Activated naive CD4-positive, alpha-beta T cell treated with anti-CD3 and anti-CD28 coated beads for 36 hours (primary cell): ENCODE measurements at regions of chr1 and their contacts with region 1.

Region 1: DNA sequence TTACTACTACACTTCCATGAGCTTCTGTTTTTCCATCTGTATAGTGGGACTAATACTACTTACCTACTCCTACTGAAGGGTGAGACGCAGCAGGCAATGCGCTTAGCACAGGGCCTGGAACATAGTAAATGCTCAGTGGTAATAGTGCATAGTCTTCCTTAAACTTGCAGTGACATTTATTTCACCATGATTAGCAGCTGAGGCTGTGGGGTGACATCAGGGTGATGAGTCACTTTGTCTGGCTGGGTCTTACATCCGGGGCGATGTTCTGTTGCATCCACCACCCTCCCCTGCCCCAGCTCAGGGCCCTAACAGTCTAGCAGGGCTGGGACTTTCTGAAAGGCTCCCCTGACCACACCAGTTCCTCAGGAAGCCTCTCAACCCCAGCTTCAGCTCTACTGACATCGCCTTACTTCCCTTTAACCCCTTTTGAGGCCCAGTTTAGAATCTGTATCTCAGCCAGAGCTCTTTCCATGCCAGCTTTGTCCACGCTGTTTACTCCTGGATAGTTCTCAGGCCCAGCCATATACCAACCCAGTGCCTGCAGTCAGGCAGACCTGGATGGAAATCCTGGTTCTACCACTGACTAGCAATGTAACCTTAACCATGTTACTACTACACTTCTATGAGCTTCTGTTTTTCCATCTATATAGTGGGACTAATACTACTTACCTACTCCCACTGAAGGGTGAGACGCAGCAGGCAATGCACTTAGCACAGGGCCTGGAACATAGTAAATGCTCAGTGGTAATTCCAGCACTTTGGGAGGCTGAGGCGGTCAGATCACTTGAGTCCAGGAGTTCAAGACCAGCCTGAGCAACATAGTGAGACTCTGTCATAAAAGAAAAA is 66.3 kb downstream of the CD58 start:
- DNase-seq: peak; percentile 92
- H3K4me3 Mint-ChIP-seq: peak overlapping the region; percentile 1
- H3K27ac Mint-ChIP-seq: peak overlapping the region; percentile 82
- H3K4me1 Mint-ChIP-seq: peaks cover 53% of the 10 kb centered on the region
- H3K27me3 Mint-ChIP-seq: no peaks in the 10 kb centered on the region

Region 2: DNA sequence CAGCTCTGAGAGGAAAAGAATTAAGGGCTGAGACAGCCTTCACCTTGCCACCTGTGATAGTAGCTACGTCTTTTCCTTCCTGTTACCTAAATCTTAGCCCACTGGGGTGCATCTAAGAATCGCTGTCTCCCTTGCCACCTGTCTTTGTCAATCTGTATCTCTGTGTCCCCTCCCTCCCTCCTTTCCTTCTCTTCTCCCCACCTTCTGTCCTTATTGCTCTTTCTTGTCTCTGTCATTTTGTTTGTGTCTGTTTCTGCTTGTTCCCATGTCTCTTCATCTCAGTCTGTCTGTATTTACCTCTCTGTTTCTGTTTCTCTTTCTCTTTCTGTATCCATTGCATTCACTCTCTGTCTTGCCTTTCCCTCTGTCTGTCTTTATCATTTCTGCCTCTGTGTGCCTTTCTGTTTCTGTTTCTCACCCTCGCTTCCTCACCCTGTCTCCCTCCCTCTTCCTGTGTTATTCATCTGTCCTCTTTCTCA is 498.0 kb before region 1 on chr1:
- CTCF ChIA-PET with region 1: no interaction called
- intact Hi-C with region 1: loop called (anchors 10 kb)
- DNase-seq: peak; percentile 10
- H3K4me3 Mint-ChIP-seq: peak overlapping the region; percentile 63
- H3K27ac Mint-ChIP-seq: peak overlapping the region; percentile 42
- H3K4me1 Mint-ChIP-seq: peaks cover 11% of the 10 kb centered on the region
- H3K27me3 Mint-ChIP-seq: no peaks in the 10 kb centered on the region

Region 3: DNA sequence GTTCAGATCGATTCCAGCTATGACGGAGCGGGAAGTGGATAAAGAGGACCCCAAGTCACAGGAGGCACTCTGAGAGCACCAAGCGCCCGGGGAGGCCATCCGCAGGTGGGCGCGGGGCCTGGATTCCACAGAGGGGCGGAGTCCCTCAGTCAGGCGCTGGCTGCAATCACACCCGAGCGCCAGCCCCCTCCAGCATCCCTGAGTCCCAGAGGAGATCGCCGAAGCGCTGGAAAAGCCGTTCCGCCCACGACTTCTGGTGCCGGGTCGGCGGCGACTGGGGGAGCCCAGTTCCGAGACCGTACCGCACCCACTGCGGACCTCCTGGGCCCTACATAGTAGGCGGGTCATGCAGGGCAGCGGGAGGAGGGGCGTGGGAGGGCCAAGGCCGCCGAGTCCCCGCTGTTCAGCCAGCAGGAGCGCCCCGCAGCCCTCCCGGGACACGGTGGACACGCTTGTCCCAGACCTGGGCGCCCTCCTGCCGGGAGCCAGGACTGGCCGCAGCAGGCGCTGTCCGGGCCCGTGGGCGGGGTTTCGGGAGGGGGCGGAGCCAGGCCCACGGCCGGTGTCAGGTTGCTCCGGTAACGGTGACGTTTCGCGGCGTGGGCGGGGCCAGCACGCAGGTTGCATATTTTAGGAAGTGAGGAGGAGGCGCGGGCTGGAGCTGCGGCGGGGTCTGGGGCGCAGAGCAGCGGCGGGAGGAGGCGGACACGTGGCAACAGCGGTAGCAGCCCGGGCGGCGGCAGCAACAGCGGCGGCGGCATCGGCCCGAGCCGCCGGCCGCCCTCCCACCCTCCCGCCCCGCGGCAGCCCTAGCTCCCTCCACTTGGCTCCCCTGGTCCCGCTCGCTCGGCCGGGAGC is 131.7 kb before region 1 on chr1 and contains the start of gene ATP1A1:
- CTCF ChIA-PET with region 1: no interaction called
- intact Hi-C with region 1: loop called (anchors 1 kb)
- DNase-seq: peak; percentile 98
- H3K4me3 Mint-ChIP-seq: peak within 1 kb of the TSS; percentile 92
- H3K27ac Mint-ChIP-seq: peak within 1 kb of the TSS; percentile 95
- H3K4me1 Mint-ChIP-seq: peaks cover 30% of the 10 kb centered on the region
- H3K27me3 Mint-ChIP-seq: no peaks in the 10 kb centered on the region
- total RNA-seq, gene ATP1A1: 360 to 370 TPM

Region 4: DNA sequence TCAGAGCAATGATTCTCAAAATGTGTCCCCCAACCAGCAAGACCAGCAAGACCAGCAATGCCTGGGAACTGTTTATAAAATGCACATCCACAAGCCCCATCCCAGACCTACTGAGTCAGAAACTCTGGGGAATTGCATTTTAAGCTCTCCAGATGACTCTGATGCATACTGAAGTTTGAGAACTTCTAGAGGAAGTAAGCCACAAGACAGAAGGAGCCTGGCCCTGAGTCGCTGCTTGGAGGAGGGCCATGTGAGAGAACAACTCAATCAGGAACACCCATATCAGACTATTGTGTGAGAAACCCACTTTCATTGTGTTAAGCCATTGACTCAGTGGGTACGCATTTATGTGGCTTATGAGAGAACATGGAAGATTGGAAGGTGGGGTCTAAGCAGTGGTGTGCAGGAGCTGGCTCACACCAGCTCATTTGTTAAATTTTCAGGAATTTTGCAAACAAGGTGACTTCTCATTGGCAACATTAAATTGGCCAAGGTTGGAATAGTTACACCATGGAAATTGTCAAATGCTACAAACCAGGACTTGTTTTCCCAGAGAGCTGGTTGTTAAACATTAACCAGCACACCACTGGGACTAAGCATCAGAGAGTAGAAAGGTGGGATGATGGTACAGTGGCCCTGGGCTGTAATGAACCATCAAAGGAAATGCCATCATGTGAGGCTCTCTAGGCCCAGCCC is 92.6 kb before region 1 on chr1:
- CTCF ChIA-PET with region 1: no interaction called
- intact Hi-C with region 1: no loop called
- DNase-seq: no peak
- H3K4me3 Mint-ChIP-seq: no peak overlapping the region
- H3K27ac Mint-ChIP-seq: no peak overlapping the region
- H3K4me1 Mint-ChIP-seq: peaks cover 25% of the 10 kb centered on the region
- H3K27me3 Mint-ChIP-seq: no peaks in the 10 kb centered on the region

Region 5: GRCh38 chr1:116435806-116436610 is 68.5 kb before region 1 on chr1:
- CTCF ChIA-PET with region 1: no interaction called
- intact Hi-C with region 1: loop called (anchors 1 kb)
- DNase-seq: no peak
- H3K4me3 Mint-ChIP-seq: no peak overlapping the region
- H3K27ac Mint-ChIP-seq: no peak overlapping the region
- H3K4me1 Mint-ChIP-seq: no peaks in the 10 kb centered on the region
- H3K27me3 Mint-ChIP-seq: no peaks in the 10 kb centered on the region

Region 6: DNA sequence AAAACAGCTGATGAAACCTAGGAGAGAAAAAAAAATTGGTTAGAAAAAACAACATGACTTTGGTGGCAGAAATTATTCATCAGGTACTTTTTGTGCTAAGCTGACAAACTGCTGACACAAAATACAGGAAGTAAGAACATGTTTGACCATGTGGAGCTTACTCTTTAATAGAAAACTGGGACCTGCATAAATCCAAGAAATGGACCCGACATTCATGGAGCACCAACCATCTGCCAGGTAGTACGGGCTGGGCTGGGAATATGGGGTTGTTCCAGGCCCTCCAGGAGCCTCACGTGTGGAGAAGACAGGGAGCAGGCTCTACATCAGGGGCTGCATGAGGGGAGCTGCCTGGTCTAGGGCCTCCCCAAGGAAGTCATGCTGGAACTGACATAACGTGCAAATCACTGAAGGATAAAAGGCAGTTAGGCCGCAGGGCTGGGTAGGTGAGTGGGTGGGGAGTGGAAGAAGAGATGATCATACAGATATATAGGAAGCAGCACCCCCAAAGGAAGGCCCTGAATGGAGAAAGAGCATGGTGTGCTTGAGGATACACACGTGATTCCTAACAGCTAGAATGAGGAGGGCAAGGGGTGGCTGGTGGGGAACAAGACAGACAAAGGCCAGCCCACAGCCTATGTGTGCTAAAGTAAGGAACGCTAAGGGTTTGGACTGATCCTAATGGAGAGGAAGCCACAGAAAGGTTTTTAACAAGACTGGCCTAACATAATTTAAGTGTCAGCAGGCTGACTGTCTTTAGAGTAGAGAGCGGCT is 40.2 kb after region 1 on chr1:
- CTCF ChIA-PET with region 1: no interaction called
- intact Hi-C with region 1: loop called (anchors 1 kb)
- DNase-seq: peak; percentile 27
- H3K4me3 Mint-ChIP-seq: peak overlapping the region; percentile 60
- H3K27ac Mint-ChIP-seq: peak overlapping the region; percentile 84
- H3K4me1 Mint-ChIP-seq: peaks cover 27% of the 10 kb centered on the region
- H3K27me3 Mint-ChIP-seq: no peaks in the 10 kb centered on the region

Region 7: GRCh38 chr1:116763787-116764465 is 259.4 kb after region 1 on chr1:
- CTCF ChIA-PET with region 1: no interaction called
- intact Hi-C with region 1: loop called (anchors 1 kb)
- DNase-seq: peak; percentile 68
- H3K4me3 Mint-ChIP-seq: peak overlapping the region; percentile 100
- H3K27ac Mint-ChIP-seq: peak overlapping the region; percentile 100
- H3K4me1 Mint-ChIP-seq: peaks cover 87% of the 10 kb centered on the region
- H3K27me3 Mint-ChIP-seq: no peaks in the 10 kb centered on the region

Region 8: GRCh38 chr1:116833718-116834117 is 329.2 kb after region 1 on chr1:
- CTCF ChIA-PET with region 1: no interaction called
- intact Hi-C with region 1: no loop called
- DNase-seq: no peak
- H3K4me3 Mint-ChIP-seq: no peak overlapping the region
- H3K27ac Mint-ChIP-seq: no peak overlapping the region
- H3K4me1 Mint-ChIP-seq: peaks cover 44% of the 10 kb centered on the region
- H3K27me3 Mint-ChIP-seq: no peaks in the 10 kb centered on the region

Region 9: GRCh38 chr1:116934586-116935207 is 430.2 kb after region 1 on chr1:
- CTCF ChIA-PET with region 1: no interaction called
- intact Hi-C with region 1: loop called (anchors 2 kb)
- DNase-seq: no peak
- H3K4me3 Mint-ChIP-seq: no peak overlapping the region
- H3K27ac Mint-ChIP-seq: no peak overlapping the region
- H3K4me1 Mint-ChIP-seq: peaks cover 18% of the 10 kb centered on the region
- H3K27me3 Mint-ChIP-seq: no peaks in the 10 kb centered on the region